Right lobe of liver (tissue), 6 donors: ENCODE measurements at regions of chr3 and their contacts with region 1.

Region 1: GRCh38 chr3:98329392-98330124 is 24.1 kb upstream of the OR5K4 start:
- DNase-seq: peak in 2 of 3 donors; percentile 17 to 51
- ATAC-seq: peak; percentile 87 to 93 (median 90)
- H3K4me3 ChIP-seq: no peak overlapping the region
- H3K27ac ChIP-seq: no peak overlapping the region
- H3K4me1 ChIP-seq: no peaks in the 10 kb centered on the region
- H3K27me3 ChIP-seq: no peaks in the 10 kb centered on the region
- CTCF ChIP-seq: peak; percentile 69 to 82 (median 72)
- POLR2A ChIP-seq: no peak

Region 2: DNA sequence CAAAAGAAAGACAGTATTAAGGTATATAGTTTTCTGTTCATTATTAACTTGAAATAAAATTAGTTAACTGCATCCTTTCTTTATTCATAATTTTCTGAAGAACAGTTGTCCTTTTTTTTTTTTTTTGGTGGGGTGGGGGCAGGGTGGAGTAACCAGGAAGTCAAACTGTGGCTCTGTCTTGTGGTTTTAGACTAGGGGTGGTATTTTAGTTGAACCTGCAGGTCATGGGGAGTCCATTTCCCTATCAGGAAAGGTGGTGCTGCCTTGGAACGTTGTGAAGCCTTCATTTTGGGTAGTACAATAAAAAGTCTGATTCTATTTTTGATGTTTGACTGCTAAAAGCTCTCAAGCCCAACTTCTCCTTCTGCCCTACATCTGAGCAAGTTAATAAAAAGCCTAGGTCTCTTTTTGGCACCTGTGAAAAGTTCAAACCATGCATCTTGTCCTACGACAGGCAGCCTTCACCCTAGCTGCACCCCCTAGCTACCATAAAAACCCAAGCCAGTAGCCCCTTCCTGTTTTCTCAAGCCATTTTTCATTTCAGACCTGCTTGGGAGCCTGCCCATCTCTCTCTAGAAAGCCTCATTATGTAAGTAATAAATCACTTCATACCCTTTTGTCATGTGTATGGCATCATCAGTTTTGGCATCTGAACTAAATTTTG is 326.1 kb before region 1 on chr3:
- intact Hi-C with region 1: no loop called
- DNase-seq: no peak
- ATAC-seq: no peak
- H3K4me3 ChIP-seq: no peak overlapping the region
- H3K27ac ChIP-seq: no peak overlapping the region
- H3K4me1 ChIP-seq: no peaks in the 10 kb centered on the region
- H3K27me3 ChIP-seq: no peaks in the 10 kb centered on the region
- CTCF ChIP-seq: no peak
- POLR2A ChIP-seq: no peak

Region 3: DNA sequence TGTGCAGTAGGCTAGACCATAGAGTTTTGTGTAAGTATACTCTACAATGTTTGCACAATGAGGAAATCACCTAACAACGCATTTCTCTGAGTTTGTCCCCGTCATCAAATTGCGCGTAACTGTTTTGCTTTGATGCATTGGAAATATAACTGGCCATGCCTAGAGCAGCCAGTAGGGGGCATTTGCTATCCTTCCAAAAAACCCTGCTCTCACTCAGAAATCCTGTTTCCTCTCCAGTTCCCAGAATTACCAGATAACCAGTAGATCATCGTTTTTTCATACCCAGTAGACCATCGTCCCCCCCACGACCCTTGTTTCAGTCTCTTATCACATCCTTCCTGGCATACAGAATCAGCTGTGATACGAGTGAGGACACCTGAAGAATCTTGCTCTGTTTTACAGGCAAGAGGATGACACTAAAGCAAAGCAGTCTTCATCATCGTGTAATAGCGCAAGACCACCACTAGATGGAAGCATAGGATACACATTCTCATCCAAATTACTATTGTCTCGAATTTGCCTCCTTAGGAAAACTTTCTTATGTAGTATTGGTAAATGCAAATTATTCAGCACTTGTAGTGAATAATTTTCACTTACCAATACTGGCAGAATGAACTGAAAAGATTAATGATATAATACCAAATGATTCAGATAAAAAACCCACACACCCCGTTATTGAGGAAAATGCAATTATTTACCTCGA is 290.1 kb before region 1 on chr3:
- intact Hi-C with region 1: loop called (anchors 5 to 10 kb)
- DNase-seq: peak in 2 of 3 donors; percentile 21 to 49
- ATAC-seq: peak; percentile 99 to 100 (median 99)
- H3K4me3 ChIP-seq: peak overlapping the region in 2 of 3 donors; percentile 4 to 31
- H3K27ac ChIP-seq: no peak overlapping the region
- H3K4me1 ChIP-seq: no peaks in the 10 kb centered on the region
- H3K27me3 ChIP-seq: peaks cover 0 to 6% of the 10 kb centered on the region in 2 donors
- CTCF ChIP-seq: peak; percentile 82 to 92 (median 86)
- POLR2A ChIP-seq: no peak